Sciatic nerve (tissue), 2 donors: ENCODE measurements at regions of chr21 and their contacts with region 1.

Region 1: DNA sequence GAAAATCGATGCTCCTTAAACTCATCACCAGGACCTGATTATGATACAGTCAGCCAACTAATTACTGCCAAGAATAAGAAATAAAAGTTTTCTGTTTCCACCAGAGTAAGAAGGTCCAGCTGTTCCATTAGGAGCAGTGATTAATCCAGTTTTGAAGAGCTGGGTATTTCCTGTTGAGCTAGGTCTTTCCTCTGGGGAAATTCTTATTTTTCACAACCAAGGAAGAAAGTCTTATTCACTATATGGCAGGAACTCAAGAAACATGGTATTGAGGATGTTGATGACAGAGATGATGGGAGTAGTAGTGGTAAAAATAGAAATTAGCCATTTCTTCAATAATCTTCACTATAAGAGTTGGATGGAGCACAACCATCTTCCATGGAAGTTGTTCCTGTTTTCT is 374.6 kb upstream of the RUNX1 start:
- DNase-seq: no peak
- ATAC-seq: peak; percentile 36

Region 2: DNA sequence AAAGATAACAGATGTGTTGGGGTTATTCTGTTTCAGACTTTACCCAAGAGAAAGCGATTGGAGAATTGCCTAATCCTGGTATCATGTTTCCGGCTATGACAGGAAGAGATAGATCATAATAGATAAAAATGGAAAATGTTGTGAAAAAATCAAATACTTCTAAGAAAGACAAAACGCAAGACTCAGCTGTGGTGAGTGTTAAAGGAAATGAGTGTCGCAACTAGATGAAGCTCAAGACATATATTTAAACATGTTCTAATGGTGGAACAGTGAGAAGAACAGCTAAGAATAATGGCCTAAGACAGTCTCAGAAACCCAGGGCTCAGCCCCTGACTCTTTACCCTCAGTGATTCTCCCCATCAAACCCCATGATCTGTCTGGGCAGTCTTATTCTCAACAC is 52.1 kb after region 1 on chr21:
- intact Hi-C with region 1: no loop called
- DNase-seq: no peak
- ATAC-seq: peak; percentile 78

Region 3: DNA sequence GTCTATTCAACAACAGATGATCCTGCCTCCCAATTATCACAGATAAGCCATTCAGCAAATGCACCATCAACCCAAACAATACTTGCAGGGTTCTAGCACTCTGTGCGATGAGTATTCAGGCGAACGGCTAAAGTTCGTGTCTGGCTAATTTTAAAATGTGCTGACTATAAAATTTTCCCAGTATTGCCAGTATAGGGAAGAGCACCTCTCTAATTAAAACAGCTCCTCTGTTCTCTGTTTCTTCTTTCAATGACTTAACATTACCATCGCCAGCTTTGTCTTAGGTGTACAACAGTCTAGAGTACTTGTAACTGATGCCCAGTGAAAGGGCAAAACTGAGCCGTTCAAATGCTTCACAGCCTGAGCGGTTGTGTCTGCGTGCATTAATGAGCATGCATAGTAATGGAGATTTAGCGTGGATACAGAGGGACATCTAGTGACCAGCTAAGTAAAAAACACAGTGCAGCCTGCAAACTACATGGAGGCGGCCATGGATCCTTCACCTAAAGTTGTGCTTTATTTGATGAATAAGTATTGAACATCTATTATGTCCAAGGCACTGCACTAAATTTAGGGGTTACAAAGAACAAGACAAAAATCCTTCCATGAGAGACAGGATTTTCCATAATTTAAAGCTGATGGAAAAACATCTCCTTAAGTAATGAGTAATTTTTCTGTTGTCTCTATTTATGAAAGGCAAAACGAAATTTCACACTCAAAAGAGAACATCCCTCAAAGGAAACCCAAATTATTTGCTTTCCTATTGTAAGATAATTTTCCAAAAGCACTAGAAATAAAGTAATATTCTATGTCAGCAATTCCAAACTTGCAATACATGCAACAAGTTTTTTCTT is 516.6 kb after region 1 on chr21:
- intact Hi-C with region 1: loop called (anchors 5 kb)
- DNase-seq: no peak
- ATAC-seq: peak; percentile 98